K562 (cell line): ENCODE measurements at regions of chr5 and their contacts with region 1.

Region 1: GRCh38 chr5:112174959-112175594 is 244.0 kb downstream of the EPB41L4A start:
- DNase-seq: peak; percentile 60 to 74 (median 67)
- ATAC-seq: peak; percentile 92
- H3K4me3 ChIP-seq: no peak overlapping the region
- H3K27ac ChIP-seq: no peak overlapping the region
- H3K4me1 ChIP-seq: no peaks in the 10 kb centered on the region
- H3K27me3 ChIP-seq: no peaks in the 10 kb centered on the region
- CTCF ChIP-seq: peak; percentile 55 to 80 (median 66); a peak in 5 of 6 replicates
- EP300 ChIP-seq: no peak
- POLR2A ChIP-seq: no peak
- RAD21 ChIP-seq: peak; percentile 73 to 84

Region 2: DNA sequence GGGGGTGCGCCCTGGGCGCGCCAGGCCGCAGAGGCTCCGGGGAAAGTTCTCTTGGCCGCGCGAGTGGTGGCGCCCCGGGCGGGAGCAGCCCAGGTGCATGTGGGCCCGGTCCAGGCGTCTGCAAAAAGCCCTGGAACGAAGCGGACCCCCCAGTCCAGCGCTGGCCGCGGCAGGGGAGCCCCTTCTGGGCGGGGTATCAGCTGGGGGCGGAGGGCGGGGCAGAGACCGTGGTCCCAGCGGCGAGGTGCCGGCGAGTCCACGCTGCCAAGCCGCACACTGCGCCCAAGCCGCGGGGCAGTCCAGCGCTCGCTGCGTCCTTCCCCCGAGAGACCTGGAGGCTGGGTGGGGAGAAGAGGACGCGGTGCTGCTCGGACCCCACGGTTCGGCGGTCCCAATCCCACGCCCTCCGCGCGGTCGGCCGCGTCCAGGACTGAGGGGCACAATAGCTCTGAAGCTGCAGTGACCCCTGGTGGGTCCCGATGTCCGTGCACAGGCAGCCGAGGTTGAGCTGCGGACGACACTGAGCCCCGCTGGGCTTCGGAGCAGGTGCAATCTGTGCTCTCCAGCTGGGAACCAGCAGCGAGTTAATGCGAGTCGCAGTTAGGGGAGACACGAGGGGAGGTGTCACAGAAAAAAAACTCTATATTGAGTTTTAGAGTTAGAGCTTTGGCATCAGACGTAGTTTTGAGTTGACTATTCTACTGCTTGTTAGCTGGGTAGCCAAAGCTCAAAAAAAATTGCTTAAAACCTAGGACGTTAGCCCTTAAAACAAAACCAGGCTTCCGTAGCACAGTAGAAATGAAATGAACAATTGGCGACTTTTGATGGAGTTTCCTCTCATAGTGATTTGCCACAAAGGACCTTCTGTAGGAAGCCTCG is 245.1 kb after region 1 on chr5:
- CTCF ChIA-PET with region 1: interaction called, 10 read pairs
- POLR2A ChIA-PET with region 1: interaction called, 3 read pairs
- in situ Hi-C with region 1: loop called (anchors 10 kb)
- intact Hi-C with region 1: loop called (anchors 1 kb)
- DNase-seq: peak; percentile 61 to 78 (median 72)
- ATAC-seq: peak; percentile 100
- H3K4me3 ChIP-seq: peak overlapping the region; percentile 42
- H3K27ac ChIP-seq: no peak overlapping the region
- H3K4me1 ChIP-seq: peaks cover 0 to 20% of the 10 kb centered on the region in 2 experiments; a peak in 3 of 5 replicates
- H3K27me3 ChIP-seq: peaks cover 4 to 33% of the 10 kb centered on the region in 2 experiments; a peak in 4 of 5 replicates
- CTCF ChIP-seq: peak; percentile 80 to 95 (median 84)
- EP300 ChIP-seq: no peak
- POLR2A ChIP-seq: no peak
- RAD21 ChIP-seq: peak; percentile 80 to 81

Region 3: DNA sequence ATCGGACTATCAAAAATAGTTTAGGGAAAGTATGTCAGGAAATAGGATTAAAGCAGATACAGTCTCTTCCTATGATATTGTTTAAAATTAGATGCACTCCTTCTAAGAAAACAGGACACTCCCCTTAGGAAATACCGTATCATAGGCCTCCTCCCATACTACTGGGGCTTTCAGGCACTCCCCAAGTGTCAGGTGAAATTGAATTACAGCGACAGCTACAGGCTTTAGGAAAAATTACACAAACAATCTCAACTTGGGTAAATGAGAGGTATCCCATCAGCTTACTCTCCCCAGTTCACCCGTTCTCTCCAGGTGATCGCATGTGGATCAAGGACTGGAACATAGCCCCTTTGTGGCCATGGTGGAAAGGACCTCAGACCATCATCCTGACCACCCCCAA is 354.4 kb after region 1 on chr5:
- CTCF ChIA-PET with region 1: no interaction called
- POLR2A ChIA-PET with region 1: no interaction called
- in situ Hi-C with region 1: no loop called
- intact Hi-C with region 1: loop called (anchors 10 kb)
- DNase-seq: peak; percentile 27 to 41 (median 34)
- ATAC-seq: peak; percentile 83
- H3K4me3 ChIP-seq: no peak overlapping the region
- H3K27ac ChIP-seq: no peak overlapping the region
- H3K4me1 ChIP-seq: peaks cover 0 to 3% of the 10 kb centered on the region in 2 experiments; a peak in 2 of 5 replicates
- H3K27me3 ChIP-seq: no peaks in the 10 kb centered on the region
- CTCF ChIP-seq: peak; percentile 42 to 55 (median 53); a peak in 5 of 6 replicates
- EP300 ChIP-seq: no peak
- POLR2A ChIP-seq: no peak
- RAD21 ChIP-seq: peak in 1 of 2 experiments; percentile 45; a peak in 3 of 4 replicates

Region 4: GRCh38 chr5:112604732-112605630 is 429.9 kb after region 1 on chr5:
- CTCF ChIA-PET with region 1: interaction called, 3 read pairs
- POLR2A ChIA-PET with region 1: no interaction called
- in situ Hi-C with region 1: no loop called
- intact Hi-C with region 1: loop called (anchors 10 kb)
- DNase-seq: peak in 3 of 4 experiments; percentile 17 to 58 (median 43)
- ATAC-seq: peak; percentile 97
- H3K4me3 ChIP-seq: no peak overlapping the region
- H3K27ac ChIP-seq: no peak overlapping the region
- H3K4me1 ChIP-seq: no peaks in the 10 kb centered on the region
- H3K27me3 ChIP-seq: peaks cover 0 to 17% of the 10 kb centered on the region in 2 experiments; a peak in 3 of 5 replicates
- CTCF ChIP-seq: peak; percentile 59 to 77 (median 63)
- EP300 ChIP-seq: no peak
- POLR2A ChIP-seq: no peak
- RAD21 ChIP-seq: peak; percentile 65 to 83